SK-N-SH (cell line): ENCODE measurements at regions of chr11 and their contacts with region 1.

Region 1: GRCh38 chr11:59135648-59136461 is 6.8 kb upstream of the FAM111A start:
- DNase-seq: peak; percentile 86
- H3K4me3 ChIP-seq: peak overlapping the region; percentile 12 to 35; a peak in 2 of 4 replicates
- H3K27ac ChIP-seq: no peak overlapping the region
- H3K4me1 ChIP-seq: peaks cover 0 to 3% of the 10 kb centered on the region in 2 experiments; a peak in 1 of 4 replicates
- H3K27me3 ChIP-seq: no peaks in the 10 kb centered on the region
- CTCF ChIP-seq: peak; percentile 98
- EP300 ChIP-seq: no peak
- RAD21 ChIP-seq: peak; percentile 94

Region 2: GRCh38 chr11:58636587-58636986 is 499.3 kb before region 1 on chr11:
- CTCF ChIA-PET with region 1: no interaction called
- POLR2A ChIA-PET with region 1: no interaction called
- DNase-seq: no peak
- H3K4me3 ChIP-seq: no peak overlapping the region
- H3K27ac ChIP-seq: no peak overlapping the region
- H3K4me1 ChIP-seq: no peaks in the 10 kb centered on the region
- H3K27me3 ChIP-seq: peaks cover 5% of the 10 kb centered on the region; the same call in 1 of the 2 replicates
- CTCF ChIP-seq: no peak
- EP300 ChIP-seq: no peak
- RAD21 ChIP-seq: no peak

Region 3: DNA sequence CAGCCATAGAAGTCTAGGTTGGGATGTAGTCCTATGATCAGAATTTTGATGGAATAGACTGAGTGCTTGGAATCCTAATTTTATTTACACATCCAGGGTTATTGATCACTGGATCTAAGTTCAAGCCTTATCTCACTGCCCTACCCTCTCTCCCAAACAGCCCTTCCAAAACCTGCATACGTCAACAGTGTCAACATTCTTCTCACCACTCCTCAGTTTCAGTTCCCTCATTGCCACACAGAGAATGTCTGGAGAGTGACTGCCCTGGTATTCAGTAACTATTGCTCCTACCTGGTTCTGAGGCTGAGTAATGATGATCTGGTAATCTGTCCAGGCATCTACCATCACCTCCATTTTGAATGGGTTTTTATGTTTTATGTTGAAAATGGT is 136.6 kb before region 1 on chr11:
- CTCF ChIA-PET with region 1: no interaction called
- POLR2A ChIA-PET with region 1: no interaction called
- DNase-seq: no peak
- H3K4me3 ChIP-seq: no peak overlapping the region
- H3K27ac ChIP-seq: no peak overlapping the region
- H3K4me1 ChIP-seq: no peaks in the 10 kb centered on the region
- H3K27me3 ChIP-seq: no peaks in the 10 kb centered on the region; the same call in 1 of the 2 replicates
- CTCF ChIP-seq: no peak
- EP300 ChIP-seq: no peak
- RAD21 ChIP-seq: no peak

Region 4: DNA sequence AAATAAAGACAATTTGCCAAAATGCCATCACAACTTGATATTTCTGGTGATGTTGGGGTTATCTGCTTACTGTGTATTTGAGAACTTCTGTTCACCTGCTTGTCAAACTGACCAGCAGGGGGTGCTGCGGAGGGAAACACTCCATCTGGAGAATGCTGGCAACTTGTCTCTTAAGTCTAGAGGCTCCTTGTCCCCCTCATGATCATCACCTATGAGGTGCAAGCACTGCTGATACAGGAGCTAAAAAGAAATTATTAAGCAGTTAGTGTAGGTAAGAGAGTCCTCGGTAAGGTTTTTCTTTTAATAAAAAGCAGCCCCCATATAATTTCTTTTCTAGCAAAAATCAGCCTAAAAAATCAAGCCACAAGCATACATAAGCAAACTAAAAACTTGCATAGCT is 82.5 kb before region 1 on chr11:
- CTCF ChIA-PET with region 1: interaction called, 24 read pairs
- POLR2A ChIA-PET with region 1: interaction called, 3 read pairs
- DNase-seq: peak; percentile 21
- H3K4me3 ChIP-seq: no peak overlapping the region; a peak in 1 of 4 replicates
- H3K27ac ChIP-seq: no peak overlapping the region
- H3K4me1 ChIP-seq: no peaks in the 10 kb centered on the region; a peak in 1 of 4 replicates
- H3K27me3 ChIP-seq: no peaks in the 10 kb centered on the region; the same call in 1 of the 2 replicates
- CTCF ChIP-seq: peak; percentile 74
- EP300 ChIP-seq: no peak
- RAD21 ChIP-seq: peak; percentile 37; the same call in 1 of the 2 replicates

Region 5: DNA sequence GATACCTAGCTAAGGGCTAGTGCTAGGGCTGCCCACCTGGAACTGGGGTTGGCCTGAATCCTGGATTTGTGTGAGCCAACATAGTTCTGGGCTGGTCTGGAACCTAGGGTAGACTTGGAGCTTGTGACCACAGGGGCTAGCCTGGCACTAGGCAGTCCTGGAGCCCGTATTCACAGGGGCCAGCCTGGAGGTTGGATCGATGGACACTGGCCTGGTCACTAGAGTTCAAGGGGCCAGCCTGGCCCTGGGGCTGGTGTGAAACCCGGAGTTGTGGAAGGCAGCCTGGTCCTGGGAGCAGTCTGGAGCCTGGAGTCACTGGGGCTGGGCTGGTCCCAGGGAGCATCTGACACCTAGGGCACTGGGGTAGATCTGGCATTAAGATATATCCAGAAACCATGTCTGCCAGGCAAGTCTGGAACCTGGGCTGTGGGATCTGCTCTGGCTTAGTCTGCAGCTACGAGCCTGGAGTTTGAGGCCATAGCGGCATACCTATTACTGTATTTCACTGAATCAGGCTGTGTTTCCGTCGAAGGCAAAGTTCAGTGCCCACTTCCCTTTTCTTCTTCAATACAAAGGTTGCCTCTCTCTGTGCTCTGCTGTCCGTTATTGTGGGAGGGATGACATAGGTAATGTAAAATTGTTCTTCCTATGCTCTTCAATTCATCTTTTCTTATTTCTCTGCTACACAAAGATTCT is 58.8 kb before region 1 on chr11:
- CTCF ChIA-PET with region 1: interaction called, 16 read pairs
- POLR2A ChIA-PET with region 1: no interaction called
- DNase-seq: no peak
- H3K4me3 ChIP-seq: no peak overlapping the region
- H3K27ac ChIP-seq: no peak overlapping the region
- H3K4me1 ChIP-seq: no peaks in the 10 kb centered on the region
- H3K27me3 ChIP-seq: no peaks in the 10 kb centered on the region
- CTCF ChIP-seq: no peak
- EP300 ChIP-seq: no peak
- RAD21 ChIP-seq: no peak

Region 6: GRCh38 chr11:59097113-59097708 is 38.6 kb before region 1 on chr11:
- CTCF ChIA-PET with region 1: interaction called, 43 read pairs
- POLR2A ChIA-PET with region 1: no interaction called
- DNase-seq: peak; percentile 34
- H3K4me3 ChIP-seq: no peak overlapping the region
- H3K27ac ChIP-seq: no peak overlapping the region
- H3K4me1 ChIP-seq: no peaks in the 10 kb centered on the region
- H3K27me3 ChIP-seq: peaks cover 3% of the 10 kb centered on the region; the same call in 1 of the 2 replicates
- CTCF ChIP-seq: peak; percentile 70
- EP300 ChIP-seq: no peak
- RAD21 ChIP-seq: peak; percentile 55

Region 7: GRCh38 chr11:59119826-59120225 is 16.0 kb before region 1 on chr11:
- CTCF ChIA-PET with region 1: interaction called, 40 read pairs
- POLR2A ChIA-PET with region 1: no interaction called
- DNase-seq: no peak
- H3K4me3 ChIP-seq: no peak overlapping the region
- H3K27ac ChIP-seq: no peak overlapping the region
- H3K4me1 ChIP-seq: no peaks in the 10 kb centered on the region
- H3K27me3 ChIP-seq: no peaks in the 10 kb centered on the region
- CTCF ChIP-seq: no peak
- EP300 ChIP-seq: no peak
- RAD21 ChIP-seq: no peak

Region 8: DNA sequence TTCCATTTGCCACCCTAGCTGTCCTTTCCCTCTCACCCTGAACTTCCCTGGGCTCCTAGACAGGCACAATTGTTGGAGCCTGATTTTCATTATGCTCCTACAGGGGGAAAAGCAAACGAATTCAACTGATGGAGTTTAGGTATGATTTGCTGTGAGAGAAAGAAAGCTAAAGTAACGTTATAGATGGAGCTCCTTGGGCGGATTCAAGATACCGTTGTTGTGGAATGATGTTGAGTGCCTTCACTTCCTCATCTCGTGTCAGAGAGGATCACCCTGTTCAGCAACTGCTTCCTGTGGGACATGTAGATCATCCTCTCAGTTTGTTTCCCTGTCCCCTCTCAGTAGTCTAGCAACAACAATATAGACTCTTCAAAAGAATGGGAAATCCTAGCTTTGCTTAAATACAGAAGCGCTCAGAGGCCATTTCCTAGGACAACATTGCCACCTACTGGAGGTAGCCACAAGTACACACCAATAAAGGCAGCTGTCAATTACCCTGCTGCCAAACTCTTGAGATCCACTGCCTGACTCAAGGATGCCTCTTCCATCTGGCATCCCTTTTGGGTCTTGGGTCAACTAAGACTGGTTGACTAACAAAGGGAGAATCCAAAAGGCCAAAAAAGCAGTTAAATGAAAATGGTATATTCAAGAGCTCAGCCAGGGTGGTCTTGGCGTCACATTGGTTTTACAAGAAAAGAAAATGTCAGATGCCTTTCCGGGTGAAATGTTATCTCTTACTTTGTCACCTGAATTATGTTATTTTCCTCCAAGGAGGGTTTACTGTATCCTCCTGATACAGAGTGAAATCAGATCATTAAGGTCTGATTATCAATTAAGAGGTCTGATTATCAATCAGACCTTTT is 22.6 kb after region 1 on chr11:
- CTCF ChIA-PET with region 1: interaction called, 46 read pairs
- POLR2A ChIA-PET with region 1: no interaction called
- DNase-seq: peak; percentile 66
- H3K4me3 ChIP-seq: peak overlapping the region in 1 of 2 experiments; percentile 32; a peak in 1 of 4 replicates
- H3K27ac ChIP-seq: no peak overlapping the region
- H3K4me1 ChIP-seq: no peaks in the 10 kb centered on the region
- H3K27me3 ChIP-seq: peaks cover 10% of the 10 kb centered on the region; the same call in 1 of the 2 replicates
- CTCF ChIP-seq: peak; percentile 88
- EP300 ChIP-seq: no peak
- RAD21 ChIP-seq: peak; percentile 88

Region 9: GRCh38 chr11:59171508-59172322 is 35.9 kb after region 1 on chr11 and contains the start of gene DTX4:
- CTCF ChIA-PET with region 1: interaction called, 26 read pairs
- POLR2A ChIA-PET with region 1: no interaction called
- DNase-seq: peak; percentile 92
- H3K4me3 ChIP-seq: peak within 1 kb of the TSS; percentile 48 to 96
- H3K27ac ChIP-seq: no peak within 1 kb of the TSS
- H3K4me1 ChIP-seq: peaks cover 0 to 12% of the 10 kb centered on the region in 2 experiments; a peak in 1 of 4 replicates
- H3K27me3 ChIP-seq: peaks cover 48% of the 10 kb centered on the region
- CTCF ChIP-seq: peak; percentile 89
- EP300 ChIP-seq: no peak
- RAD21 ChIP-seq: peak; percentile 86
- polyA plus RNA-seq, gene DTX4: 0.02 and 0.05 TPM in 2 replicates